ENCODE measurements at regions of chr6 and their contacts with region 1.

Region 1: DNA sequence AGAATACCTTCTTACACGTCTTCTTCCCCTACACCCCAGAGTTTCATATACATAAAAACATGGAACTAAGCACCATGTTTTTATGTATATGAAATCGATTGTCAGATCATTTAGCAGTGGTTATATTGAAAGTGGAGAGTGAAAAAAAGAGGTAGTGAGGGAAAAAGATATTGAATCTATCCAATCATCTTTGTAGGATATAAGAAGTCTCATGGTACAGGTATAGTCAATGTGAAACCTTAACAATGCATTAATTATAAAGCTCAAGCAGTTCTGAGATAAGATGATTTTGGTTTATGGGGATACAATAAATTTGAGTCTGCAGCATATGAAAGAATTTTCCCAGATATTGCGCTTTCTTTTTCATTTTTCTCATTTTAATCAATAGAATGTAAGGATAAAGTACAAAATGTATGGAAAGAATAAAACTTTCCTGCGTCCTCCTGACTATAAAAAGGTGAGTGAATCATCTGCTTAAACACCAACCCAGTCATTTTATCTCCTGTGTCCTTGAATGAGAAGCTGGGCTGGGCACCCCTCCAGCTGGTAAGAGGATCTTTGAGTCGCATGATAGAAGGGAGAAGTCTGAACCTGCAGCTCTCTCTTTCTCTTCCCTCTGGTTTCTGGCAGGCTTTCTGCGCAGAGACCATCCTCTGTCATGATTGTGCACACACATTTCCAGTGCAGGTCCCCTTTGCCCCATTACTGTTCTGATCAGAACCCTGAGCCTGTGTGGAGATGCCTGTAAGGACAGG is 28.1 kb upstream of the AKIRIN2 start:
- DNase-seq: peak in 2 of 3 donors; percentile 49 to 55
- ATAC-seq: peak; percentile 21
- H3K4me3 ChIP-seq: no peak overlapping the region
- H3K4me1 ChIP-seq: peaks cover 32% of the 10 kb centered on the region
- CTCF ChIP-seq: no peak

Region 2: DNA sequence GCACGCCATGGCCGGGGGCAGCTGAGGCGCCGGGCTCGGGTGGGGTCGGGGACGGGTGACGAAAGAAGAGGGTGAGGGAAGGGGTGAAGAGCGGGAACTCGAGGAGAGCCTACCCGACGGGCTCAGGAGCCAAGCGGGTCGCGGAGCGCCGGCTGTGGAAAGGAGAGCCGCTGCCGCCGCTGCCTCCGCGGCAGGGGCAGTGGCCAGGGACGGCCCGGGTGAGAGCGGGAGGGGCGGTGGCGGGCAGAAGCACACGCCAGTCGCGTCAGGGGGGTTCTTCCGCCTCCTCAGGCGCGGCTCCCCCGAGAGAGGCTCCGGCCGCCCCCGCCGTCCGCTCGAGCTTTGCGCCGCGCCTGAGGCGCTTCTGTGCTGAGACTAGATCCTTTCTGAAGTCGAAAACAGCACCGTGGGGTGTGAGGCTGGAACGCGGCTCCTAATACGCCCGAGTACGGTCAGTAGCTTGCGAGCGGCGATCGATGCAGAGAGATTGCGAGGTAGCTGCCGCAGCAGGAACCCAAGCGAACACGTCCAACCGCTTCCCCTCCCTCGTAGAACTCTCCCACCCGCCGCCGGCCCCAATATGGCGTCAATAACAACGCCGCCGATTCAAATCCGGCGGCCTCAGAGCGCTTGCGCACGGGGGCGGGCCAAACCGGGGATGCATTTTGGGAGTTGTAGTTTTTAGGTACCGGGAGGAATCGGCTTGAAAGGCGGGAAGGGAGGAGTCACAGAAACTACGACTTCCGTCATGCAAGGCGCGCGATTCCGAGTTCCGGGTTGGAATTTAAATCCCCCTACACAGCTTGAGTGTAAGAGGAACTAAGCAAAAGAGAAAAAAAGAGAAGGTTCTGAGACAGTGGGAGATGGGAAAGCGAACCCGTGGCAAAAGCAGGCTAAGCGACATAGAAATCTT is 28.2 kb before region 1 on chr6 and contains the start of gene AKIRIN2:
- intact Hi-C with region 1: loop called in 1 of 2 experiments (anchors 2 kb)
- DNase-seq: peak; percentile 97 to 98 (median 97)
- ATAC-seq: peak; percentile 94
- H3K4me3 ChIP-seq: peak within 1 kb of the TSS; percentile 99
- H3K4me1 ChIP-seq: peaks cover 25% of the 10 kb centered on the region
- CTCF ChIP-seq: no peak
- total RNA-seq, gene AKIRIN2: 32.3 to 41.0 (median 33.2) TPM